Endothelial cell of umbilical vein (primary cell): ENCODE measurements at regions of chr3 and their contacts with region 1.

Region 1: DNA sequence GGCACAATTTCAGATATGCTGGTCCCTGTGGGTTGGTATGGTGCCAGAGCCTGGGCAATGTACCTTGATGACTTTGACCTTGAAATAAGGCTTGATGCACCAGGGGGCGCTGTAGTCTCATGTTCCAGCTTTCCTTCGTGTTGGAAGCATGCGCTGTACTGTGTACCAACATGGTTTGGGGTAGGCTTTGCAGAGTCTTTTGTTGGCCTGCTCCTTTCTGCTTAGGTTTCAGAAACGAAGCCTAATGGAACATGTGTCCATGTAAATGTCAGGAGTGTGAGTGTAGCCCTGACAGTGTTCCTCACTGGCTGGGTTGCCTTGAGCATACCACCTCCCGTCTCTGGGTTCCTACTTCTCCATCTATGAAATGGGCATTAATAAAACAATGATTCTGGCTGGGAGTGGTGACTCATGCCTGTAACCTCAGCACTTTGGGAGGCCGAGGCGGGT is 3.6 kb upstream of the CCR4 start:
- DNase-seq: peak; percentile 85
- H3K4me3 ChIP-seq: no peak overlapping the region
- H3K27ac ChIP-seq: no peak overlapping the region
- H3K4me1 ChIP-seq: peaks cover 5% of the 10 kb centered on the region
- H3K27me3 ChIP-seq: no peaks in the 10 kb centered on the region
- CTCF ChIP-seq: peak; percentile 73 to 84
- POLR2A ChIP-seq: no peak

Region 2: GRCh38 chr3:33074217-33075067 is 126.6 kb after region 1 on chr3:
- CTCF ChIA-PET with region 1: interaction called, 91 read pairs
- POLR2A ChIA-PET with region 1: no interaction called
- dilution Hi-C with region 1: no loop called
- intact Hi-C with region 1: loop called (anchors 1 kb)
- DNase-seq: peak; percentile 72
- H3K4me3 ChIP-seq: no peak overlapping the region
- H3K27ac ChIP-seq: no peak overlapping the region
- H3K4me1 ChIP-seq: no peaks in the 10 kb centered on the region
- H3K27me3 ChIP-seq: no peaks in the 10 kb centered on the region
- CTCF ChIP-seq: peak; percentile 93
- POLR2A ChIP-seq: no peak

Region 3: GRCh38 chr3:33167716-33168336 is 220.0 kb after region 1 on chr3:
- CTCF ChIA-PET with region 1: no interaction called
- POLR2A ChIA-PET with region 1: no interaction called
- dilution Hi-C with region 1: no loop called
- intact Hi-C with region 1: no loop called
- DNase-seq: peak; percentile 38
- H3K4me3 ChIP-seq: no peak overlapping the region
- H3K27ac ChIP-seq: no peak overlapping the region
- H3K4me1 ChIP-seq: no peaks in the 10 kb centered on the region
- H3K27me3 ChIP-seq: no peaks in the 10 kb centered on the region
- CTCF ChIP-seq: no peak
- POLR2A ChIP-seq: no peak